Activated CD4-positive, alpha-beta T cell treated with anti-CD3 and anti-CD28 coated beads for 36 hours (primary cell): ENCODE measurements at regions of chr14 and their contacts with region 1.

Region 1: GRCh38 chr14:33686218-33686617 is 264.7 kb downstream of the EGLN3 start:
- DNase-seq: no peak
- ATAC-seq: no peak
- H3K4me3 Mint-ChIP-seq: no peak overlapping the region
- H3K27ac Mint-ChIP-seq: no peak overlapping the region
- H3K4me1 Mint-ChIP-seq: no peaks in the 10 kb centered on the region
- H3K27me3 Mint-ChIP-seq: peaks cover 2% of the 10 kb centered on the region

Region 2: GRCh38 chr14:33676135-33676566 is 10.1 kb before region 1 on chr14:
- CTCF ChIA-PET with region 1: interaction called, 10 read pairs
- POLR2A ChIA-PET with region 1: no interaction called
- intact Hi-C with region 1: no loop called
- DNase-seq: peak; percentile 5
- ATAC-seq: no peak
- H3K4me3 Mint-ChIP-seq: no peak overlapping the region
- H3K27ac Mint-ChIP-seq: no peak overlapping the region
- H3K4me1 Mint-ChIP-seq: no peaks in the 10 kb centered on the region
- H3K27me3 Mint-ChIP-seq: peaks cover 4% of the 10 kb centered on the region